K562 (cell line): ENCODE measurements at regions of chr4 and their contacts with region 1.

Region 1: DNA sequence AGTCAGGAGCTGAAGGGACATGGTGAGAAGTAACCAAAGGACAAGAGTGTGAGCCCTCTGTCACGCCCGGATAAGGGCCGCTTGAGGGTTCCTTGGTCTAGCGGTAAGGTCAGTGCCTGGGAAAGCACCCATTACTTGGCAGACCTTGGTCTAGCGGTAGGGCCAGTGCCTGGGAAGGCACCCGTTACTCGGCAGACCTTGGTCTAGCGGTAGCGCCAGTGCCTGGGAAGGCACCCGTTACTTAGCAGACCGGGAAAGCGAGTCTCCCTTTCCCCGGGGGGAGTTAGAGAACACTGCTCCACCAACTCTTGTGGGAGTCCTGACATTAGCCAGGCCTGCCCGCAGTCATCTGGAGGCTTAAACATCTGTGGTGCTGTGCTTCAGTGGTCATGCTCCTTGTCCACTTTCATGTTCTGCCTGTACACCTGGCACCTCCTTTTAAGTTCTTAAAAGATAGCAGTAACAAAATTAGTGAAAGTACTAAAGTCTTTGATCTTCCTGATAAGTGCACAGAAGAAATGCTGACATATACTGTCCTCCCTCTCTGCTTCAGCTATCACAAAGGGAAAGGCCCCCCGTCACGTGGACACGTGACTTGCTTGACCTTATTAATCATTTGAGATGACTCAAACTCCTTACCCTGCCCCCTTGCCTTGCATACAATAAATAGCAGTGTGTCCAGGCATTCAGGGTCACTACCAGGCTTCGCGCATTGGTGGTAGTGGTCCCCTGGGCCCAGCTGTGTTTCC is 9.3 kb upstream of the SEC24B start:
- DNase-seq: peak; percentile 13 to 59 (median 17)
- ATAC-seq: peak; percentile 27; the same call in 1 of the 3 replicates
- H3K4me3 ChIP-seq: no peak overlapping the region
- H3K27ac ChIP-seq: no peak overlapping the region
- H3K4me1 ChIP-seq: no peaks in the 10 kb centered on the region; a peak in 2 of 5 replicates
- H3K27me3 ChIP-seq: no peaks in the 10 kb centered on the region
- CTCF ChIP-seq: no peak
- EP300 ChIP-seq: no peak
- POLR2A ChIP-seq: no peak
- RAD21 ChIP-seq: no peak

Region 2: DNA sequence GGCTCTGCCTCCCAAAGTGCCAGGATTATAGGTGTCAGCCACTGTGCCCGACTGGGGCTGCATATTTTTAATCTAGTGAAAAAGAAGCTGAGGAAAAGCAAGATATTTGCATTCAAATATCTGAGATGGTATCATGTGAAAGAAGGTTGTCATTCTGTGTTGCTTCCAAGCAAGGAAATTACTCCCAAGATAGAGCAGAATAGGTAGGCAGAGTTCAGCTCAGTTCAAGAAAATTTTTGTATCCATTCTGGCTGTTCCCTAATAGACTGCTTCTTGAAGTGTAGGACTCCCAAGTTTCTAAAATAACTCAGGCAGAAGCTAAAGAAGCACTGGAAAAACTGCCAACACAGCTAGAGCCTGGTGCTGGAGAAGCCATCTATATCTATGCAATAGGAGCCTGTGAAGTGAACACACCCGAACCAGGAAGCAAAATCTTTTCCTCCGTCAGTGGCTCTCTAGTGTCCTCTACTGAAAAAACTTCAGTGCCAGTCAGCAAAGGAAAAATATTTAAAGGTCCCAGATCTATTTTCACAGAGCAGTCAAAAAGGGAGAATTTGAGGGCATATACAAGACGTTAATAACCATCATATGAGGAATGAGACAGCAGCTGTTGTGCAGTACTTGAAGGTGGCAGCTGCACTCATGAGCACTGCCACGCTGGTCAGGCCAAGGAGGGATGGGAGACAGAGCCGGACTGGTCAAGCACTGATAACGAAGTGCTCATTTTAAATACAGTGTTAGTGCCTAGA is 150.0 kb after region 1 on chr4:
- CTCF ChIA-PET with region 1: interaction called, 3 read pairs
- POLR2A ChIA-PET with region 1: no interaction called
- in situ Hi-C with region 1: no loop called
- intact Hi-C with region 1: loop called (anchors 1 kb)
- DNase-seq: peak in 2 of 4 experiments; percentile 35 to 51
- ATAC-seq: peak; percentile 91
- H3K4me3 ChIP-seq: no peak overlapping the region
- H3K27ac ChIP-seq: no peak overlapping the region
- H3K4me1 ChIP-seq: peaks cover 0 to 16% of the 10 kb centered on the region in 2 experiments; a peak in 4 of 5 replicates
- H3K27me3 ChIP-seq: no peaks in the 10 kb centered on the region
- CTCF ChIP-seq: peak; percentile 44 to 71 (median 49); a peak in 5 of 6 replicates
- EP300 ChIP-seq: no peak
- POLR2A ChIP-seq: no peak
- RAD21 ChIP-seq: peak; percentile 48 to 71; a peak in 3 of 4 replicates

Region 3: DNA sequence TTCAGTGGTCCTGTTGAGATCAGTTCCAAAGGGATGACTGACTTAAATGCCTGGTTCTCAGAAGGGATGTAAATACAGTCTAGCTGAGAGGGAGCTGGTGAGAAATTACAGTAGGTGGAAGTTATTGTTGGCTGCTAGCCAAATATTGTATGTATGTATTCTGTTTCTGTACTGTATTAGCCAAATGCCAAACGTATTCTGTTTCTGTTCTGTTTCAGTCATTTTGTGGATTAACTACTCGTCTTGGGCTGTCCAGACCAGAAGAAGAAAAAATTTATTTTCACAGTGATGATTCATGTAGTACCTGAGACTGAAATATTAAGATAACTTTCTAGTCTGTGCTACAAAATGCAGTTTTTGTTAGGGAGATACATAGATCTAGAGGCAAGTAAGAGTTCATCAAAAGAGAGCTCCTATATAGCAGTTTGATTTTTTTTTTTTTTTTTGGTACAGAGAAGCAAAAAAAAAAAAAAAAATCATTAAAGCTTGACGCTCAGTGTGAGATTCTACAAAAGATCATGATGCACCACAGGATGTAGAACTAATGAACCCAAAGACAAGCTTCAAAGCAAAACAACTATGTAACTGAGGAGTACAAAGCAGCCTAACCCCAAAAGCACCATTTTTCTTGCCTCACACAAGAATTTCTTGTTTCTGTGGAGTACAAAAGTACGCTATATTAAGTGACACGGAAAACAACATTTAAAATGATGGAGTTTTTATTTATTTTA is 224.2 kb after region 1 on chr4:
- CTCF ChIA-PET with region 1: interaction called, 3 read pairs
- POLR2A ChIA-PET with region 1: no interaction called
- in situ Hi-C with region 1: loop called (anchors 10 kb)
- intact Hi-C with region 1: loop called (anchors 1 kb)
- DNase-seq: no peak
- ATAC-seq: no peak
- H3K4me3 ChIP-seq: no peak overlapping the region
- H3K27ac ChIP-seq: no peak overlapping the region
- H3K4me1 ChIP-seq: no peaks in the 10 kb centered on the region
- H3K27me3 ChIP-seq: peaks cover 0 to 2% of the 10 kb centered on the region in 2 experiments; a peak in 1 of 5 replicates
- CTCF ChIP-seq: no peak
- EP300 ChIP-seq: no peak
- POLR2A ChIP-seq: no peak
- RAD21 ChIP-seq: no peak; a peak in 1 of 4 replicates

Region 4: DNA sequence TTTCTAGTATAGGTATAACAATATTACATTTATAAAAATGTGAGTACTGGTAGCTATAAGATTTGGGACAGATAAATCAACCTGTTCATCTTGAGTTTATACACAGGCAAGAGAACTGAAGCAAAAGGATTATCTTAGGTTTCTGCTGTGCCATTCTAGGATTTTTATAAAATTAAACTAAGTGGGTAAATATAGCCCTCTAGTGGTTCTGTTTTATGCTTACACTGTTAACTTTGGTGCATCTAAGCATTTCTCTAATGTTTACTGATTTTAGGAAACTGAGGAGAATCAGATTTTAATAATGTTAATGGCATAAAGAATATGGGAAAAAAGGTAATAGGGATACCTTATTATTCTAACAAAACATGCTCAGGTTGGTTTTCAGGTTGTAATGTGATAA is 402.5 kb after region 1 on chr4:
- CTCF ChIA-PET with region 1: interaction called, 7 read pairs
- POLR2A ChIA-PET with region 1: no interaction called
- in situ Hi-C with region 1: no loop called
- intact Hi-C with region 1: loop called (anchors 2 kb)
- DNase-seq: peak; percentile 19 to 25 (median 21)
- ATAC-seq: peak; percentile 82
- H3K4me3 ChIP-seq: no peak overlapping the region
- H3K27ac ChIP-seq: no peak overlapping the region
- H3K4me1 ChIP-seq: no peaks in the 10 kb centered on the region
- H3K27me3 ChIP-seq: no peaks in the 10 kb centered on the region
- CTCF ChIP-seq: peak; percentile 24 to 72 (median 26); a peak in 3 of 6 replicates
- EP300 ChIP-seq: no peak
- POLR2A ChIP-seq: no peak
- RAD21 ChIP-seq: peak; percentile 75 to 76

Region 5: DNA sequence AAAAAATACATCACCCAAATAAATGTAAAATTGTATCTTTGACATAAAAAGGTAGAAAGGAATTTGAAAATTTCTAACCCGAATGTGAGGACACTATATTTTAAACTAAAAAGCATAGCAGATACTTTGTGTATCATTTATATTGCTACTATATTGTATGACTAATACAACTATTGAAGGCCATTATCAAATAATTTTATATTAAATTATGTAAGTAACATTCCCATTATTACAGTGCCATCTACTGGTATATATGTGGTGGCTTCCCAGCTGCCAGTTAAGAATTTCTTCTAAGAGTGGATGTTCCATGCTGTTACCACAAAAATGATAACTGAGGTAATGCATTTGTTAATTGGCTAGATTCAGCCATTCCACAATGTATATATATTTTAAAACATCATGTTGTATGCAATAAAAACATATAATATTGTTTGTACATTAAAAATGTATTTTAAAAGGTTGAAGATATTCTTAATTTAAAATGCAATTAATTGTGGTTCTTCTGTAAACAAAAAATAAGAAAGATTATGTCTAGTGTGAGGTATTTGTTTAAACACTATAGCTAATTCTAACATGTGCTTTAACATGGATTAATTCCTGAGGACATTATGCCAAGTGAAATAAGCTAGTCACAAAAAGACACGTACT is 553.7 kb after region 1 on chr4:
- CTCF ChIA-PET with region 1: interaction called, 9 read pairs
- POLR2A ChIA-PET with region 1: no interaction called
- in situ Hi-C with region 1: loop called (anchors 10 kb)
- intact Hi-C with region 1: loop called (anchors 1 kb)
- DNase-seq: peak in 3 of 4 experiments; percentile 17 to 29 (median 19)
- ATAC-seq: peak; percentile 67
- H3K4me3 ChIP-seq: no peak overlapping the region
- H3K27ac ChIP-seq: no peak overlapping the region
- H3K4me1 ChIP-seq: no peaks in the 10 kb centered on the region
- H3K27me3 ChIP-seq: peaks cover 0 to 4% of the 10 kb centered on the region in 2 experiments; a peak in 1 of 5 replicates
- CTCF ChIP-seq: peak; percentile 18 to 70 (median 28); a peak in 2 of 6 replicates
- EP300 ChIP-seq: no peak
- POLR2A ChIP-seq: no peak
- RAD21 ChIP-seq: peak; percentile 72 to 73

Region 6: GRCh38 chr4:110516106-110516922 is 1092.0 kb after region 1 on chr4:
- CTCF ChIA-PET with region 1: interaction called, 7 read pairs
- POLR2A ChIA-PET with region 1: no interaction called
- in situ Hi-C with region 1: loop called (anchors 25 kb)
- intact Hi-C with region 1: loop called (anchors 5 kb)
- DNase-seq: peak; percentile 44 to 67 (median 51)
- ATAC-seq: peak; percentile 97
- H3K4me3 ChIP-seq: no peak overlapping the region
- H3K27ac ChIP-seq: no peak overlapping the region
- H3K4me1 ChIP-seq: no peaks in the 10 kb centered on the region
- H3K27me3 ChIP-seq: no peaks in the 10 kb centered on the region
- CTCF ChIP-seq: peak; percentile 69 to 81 (median 76)
- EP300 ChIP-seq: no peak
- POLR2A ChIP-seq: no peak
- RAD21 ChIP-seq: peak; percentile 31 to 48